CD8-positive, alpha-beta T cell (primary cell): ENCODE measurements at regions of chr7 and their contacts with region 1.

Region 1: DNA sequence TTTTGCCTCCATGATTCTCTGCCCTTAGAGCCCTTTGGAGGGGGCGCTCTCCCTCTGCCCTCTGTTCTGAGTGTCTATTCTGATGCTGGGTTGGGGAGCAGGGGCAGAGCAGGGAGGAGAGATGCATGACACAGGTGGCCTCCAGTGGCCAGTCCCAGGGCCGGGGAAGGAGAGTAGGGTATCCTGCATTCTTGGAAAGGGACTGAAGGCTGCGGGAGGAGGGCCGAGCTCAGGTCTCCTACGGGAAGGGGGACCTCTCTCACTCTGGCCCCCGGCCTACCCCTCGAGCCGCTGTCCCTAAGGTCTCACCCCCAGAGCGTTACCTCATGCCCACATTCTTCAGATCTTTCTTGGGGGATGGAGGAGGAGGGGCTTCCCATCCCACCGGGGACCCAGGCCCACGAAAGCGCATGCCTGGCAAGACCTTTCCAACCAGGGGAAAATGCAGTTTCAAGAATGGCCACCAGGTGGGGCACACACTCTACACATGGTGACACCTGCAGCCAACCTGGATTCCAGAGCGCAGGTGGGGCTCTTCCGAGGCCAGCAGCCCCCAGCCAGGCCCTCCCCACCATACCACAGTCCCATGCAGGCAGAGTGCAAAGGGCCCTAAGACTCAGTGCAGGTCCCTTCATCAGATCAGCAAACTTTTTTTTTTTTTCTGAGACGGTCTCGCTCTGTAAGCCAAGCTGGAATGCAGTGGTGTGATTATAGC is 86.4 kb downstream of the MYL10 start:
- DNase-seq: peak; percentile 50 to 84 (median 72)
- ATAC-seq: peak; percentile 65
- H3K4me3 ChIP-seq: no peak overlapping the region
- H3K4me3 Mint-ChIP-seq: no peak overlapping the region
- H3K27ac ChIP-seq: no peak overlapping the region
- H3K27ac Mint-ChIP-seq: no peak overlapping the region
- H3K4me1 ChIP-seq: no peaks in the 10 kb centered on the region
- H3K4me1 Mint-ChIP-seq: peaks cover 6% of the 10 kb centered on the region
- H3K27me3 ChIP-seq: no peaks in the 10 kb centered on the region
- H3K27me3 Mint-ChIP-seq: no peaks in the 10 kb centered on the region
- CTCF ChIP-seq: peak; percentile 86

Region 2: GRCh38 chr7:101363734-101364374 is 178.8 kb before region 1 on chr7:
- CTCF ChIA-PET with region 1: no interaction called
- POLR2A ChIA-PET with region 1: no interaction called
- intact Hi-C with region 1: loop called (anchors 1 to 2 kb)
- DNase-seq: peak; percentile 46 to 85 (median 66)
- ATAC-seq: peak; percentile 92
- H3K4me3 ChIP-seq: peak overlapping the region; percentile 37 to 58
- H3K4me3 Mint-ChIP-seq: peak overlapping the region; percentile 61
- H3K27ac ChIP-seq: no peak overlapping the region
- H3K27ac Mint-ChIP-seq: no peak overlapping the region
- H3K4me1 ChIP-seq: peaks cover 3% of the 10 kb centered on the region
- H3K4me1 Mint-ChIP-seq: peaks cover 3% of the 10 kb centered on the region
- H3K27me3 ChIP-seq: peaks cover 6 to 9% of the 10 kb centered on the region in 2 experiments
- H3K27me3 Mint-ChIP-seq: peaks cover 15% of the 10 kb centered on the region
- CTCF ChIP-seq: peak; percentile 89

Region 3: DNA sequence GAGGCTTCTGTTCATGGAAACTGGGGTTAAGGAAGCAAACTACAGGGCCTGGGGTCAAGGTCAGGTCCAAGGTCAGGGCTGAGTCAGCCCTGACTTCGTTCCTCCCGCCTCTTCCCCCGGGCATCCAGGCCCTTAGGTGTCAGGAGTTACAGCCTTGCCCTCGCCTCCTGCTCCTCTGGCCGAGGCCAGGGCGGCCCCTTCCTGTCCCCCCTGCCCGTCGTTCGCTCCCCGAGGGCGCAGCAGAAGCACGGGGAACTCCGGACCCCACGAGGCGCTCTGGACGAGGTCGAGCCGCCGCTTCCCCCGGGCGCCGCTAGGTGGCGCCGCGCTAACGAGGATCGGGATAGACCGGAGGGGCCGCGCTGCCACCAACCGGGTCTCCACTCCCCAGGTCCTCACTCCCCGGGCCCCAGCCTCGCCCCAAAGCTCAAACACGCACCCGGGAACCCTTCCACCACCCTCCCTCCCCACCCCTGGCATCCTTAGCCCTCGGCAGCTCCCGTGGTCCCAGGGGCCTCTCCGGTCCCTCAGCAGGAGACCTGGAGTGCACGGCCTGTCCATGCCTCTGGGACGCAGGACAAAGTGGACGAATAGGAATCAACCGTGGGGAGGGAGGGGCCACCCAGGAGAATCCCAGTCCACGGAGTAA is 145.6 kb after region 1 on chr7:
- CTCF ChIA-PET with region 1: interaction called, 3 read pairs
- POLR2A ChIA-PET with region 1: no interaction called
- intact Hi-C with region 1: loop called in 1 of 2 experiments (anchors 2 kb)
- DNase-seq: peak; percentile 61 to 92 (median 81)
- ATAC-seq: peak; percentile 86
- H3K4me3 ChIP-seq: no peak overlapping the region
- H3K4me3 Mint-ChIP-seq: no peak overlapping the region
- H3K27ac ChIP-seq: no peak overlapping the region
- H3K27ac Mint-ChIP-seq: no peak overlapping the region
- H3K4me1 ChIP-seq: no peaks in the 10 kb centered on the region
- H3K4me1 Mint-ChIP-seq: peaks cover 3% of the 10 kb centered on the region
- H3K27me3 ChIP-seq: no peaks in the 10 kb centered on the region
- H3K27me3 Mint-ChIP-seq: peaks cover 2% of the 10 kb centered on the region
- CTCF ChIP-seq: peak; percentile 93

Region 4: GRCh38 chr7:101708223-101708622 is 165.5 kb after region 1 on chr7:
- CTCF ChIA-PET with region 1: no interaction called
- POLR2A ChIA-PET with region 1: no interaction called
- intact Hi-C with region 1: no loop called
- DNase-seq: no peak
- ATAC-seq: no peak
- H3K4me3 ChIP-seq: no peak overlapping the region
- H3K4me3 Mint-ChIP-seq: no peak overlapping the region
- H3K27ac ChIP-seq: no peak overlapping the region
- H3K27ac Mint-ChIP-seq: no peak overlapping the region
- H3K4me1 ChIP-seq: no peaks in the 10 kb centered on the region
- H3K4me1 Mint-ChIP-seq: no peaks in the 10 kb centered on the region
- H3K27me3 ChIP-seq: no peaks in the 10 kb centered on the region
- H3K27me3 Mint-ChIP-seq: no peaks in the 10 kb centered on the region
- CTCF ChIP-seq: no peak

Region 5: DNA sequence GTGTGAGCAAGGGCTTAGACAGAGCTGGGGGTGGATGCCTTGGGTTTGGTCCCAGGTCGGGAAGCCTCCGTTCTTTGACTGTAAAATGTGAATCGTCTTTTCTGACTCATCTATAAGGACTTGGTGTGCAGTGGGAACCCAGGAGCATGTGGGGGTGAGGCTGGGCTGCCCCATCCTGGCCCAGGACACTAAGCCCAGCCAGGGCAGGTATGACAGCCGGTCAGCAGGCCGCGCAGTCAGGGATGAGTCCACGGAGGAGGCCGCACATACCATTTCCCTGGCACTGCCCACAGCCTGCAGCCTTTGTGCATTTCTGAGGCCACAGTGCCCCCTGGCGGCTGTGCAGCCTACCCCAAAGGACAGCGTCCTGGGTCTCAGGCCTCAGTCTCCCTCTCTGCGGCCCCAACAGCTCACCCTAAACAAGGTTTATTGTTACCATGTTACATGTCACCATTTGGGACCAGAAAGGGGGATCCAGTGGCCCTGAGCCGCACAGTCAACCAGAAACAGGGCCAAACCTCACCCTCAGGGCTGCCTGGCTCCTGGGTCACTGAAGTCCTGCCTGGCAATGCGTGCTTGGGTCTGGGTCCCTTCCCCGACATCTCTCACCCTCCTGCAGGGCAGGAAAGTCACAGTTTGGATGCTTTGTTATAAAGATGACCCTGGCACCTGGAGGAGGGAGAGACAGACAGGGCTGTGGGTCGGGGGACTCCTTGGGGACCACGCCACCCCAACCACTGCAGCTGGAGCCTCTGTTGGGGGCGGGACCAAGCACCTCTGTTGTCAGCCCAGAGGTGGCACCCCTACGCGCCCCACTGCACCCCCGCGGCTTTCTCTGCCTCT is 729.6 kb after region 1 on chr7:
- CTCF ChIA-PET with region 1: interaction called, 87 read pairs
- POLR2A ChIA-PET with region 1: no interaction called
- intact Hi-C with region 1: loop called in 1 of 2 experiments (anchors 1 kb)
- DNase-seq: peak; percentile 51 to 87 (median 76)
- ATAC-seq: peak; percentile 77
- H3K4me3 ChIP-seq: no peak overlapping the region
- H3K4me3 Mint-ChIP-seq: no peak overlapping the region
- H3K27ac ChIP-seq: no peak overlapping the region
- H3K27ac Mint-ChIP-seq: no peak overlapping the region
- H3K4me1 ChIP-seq: peaks cover 2% of the 10 kb centered on the region
- H3K4me1 Mint-ChIP-seq: peaks cover 2% of the 10 kb centered on the region
- H3K27me3 ChIP-seq: no peaks in the 10 kb centered on the region
- H3K27me3 Mint-ChIP-seq: no peaks in the 10 kb centered on the region
- CTCF ChIP-seq: peak; percentile 83

Region 6: DNA sequence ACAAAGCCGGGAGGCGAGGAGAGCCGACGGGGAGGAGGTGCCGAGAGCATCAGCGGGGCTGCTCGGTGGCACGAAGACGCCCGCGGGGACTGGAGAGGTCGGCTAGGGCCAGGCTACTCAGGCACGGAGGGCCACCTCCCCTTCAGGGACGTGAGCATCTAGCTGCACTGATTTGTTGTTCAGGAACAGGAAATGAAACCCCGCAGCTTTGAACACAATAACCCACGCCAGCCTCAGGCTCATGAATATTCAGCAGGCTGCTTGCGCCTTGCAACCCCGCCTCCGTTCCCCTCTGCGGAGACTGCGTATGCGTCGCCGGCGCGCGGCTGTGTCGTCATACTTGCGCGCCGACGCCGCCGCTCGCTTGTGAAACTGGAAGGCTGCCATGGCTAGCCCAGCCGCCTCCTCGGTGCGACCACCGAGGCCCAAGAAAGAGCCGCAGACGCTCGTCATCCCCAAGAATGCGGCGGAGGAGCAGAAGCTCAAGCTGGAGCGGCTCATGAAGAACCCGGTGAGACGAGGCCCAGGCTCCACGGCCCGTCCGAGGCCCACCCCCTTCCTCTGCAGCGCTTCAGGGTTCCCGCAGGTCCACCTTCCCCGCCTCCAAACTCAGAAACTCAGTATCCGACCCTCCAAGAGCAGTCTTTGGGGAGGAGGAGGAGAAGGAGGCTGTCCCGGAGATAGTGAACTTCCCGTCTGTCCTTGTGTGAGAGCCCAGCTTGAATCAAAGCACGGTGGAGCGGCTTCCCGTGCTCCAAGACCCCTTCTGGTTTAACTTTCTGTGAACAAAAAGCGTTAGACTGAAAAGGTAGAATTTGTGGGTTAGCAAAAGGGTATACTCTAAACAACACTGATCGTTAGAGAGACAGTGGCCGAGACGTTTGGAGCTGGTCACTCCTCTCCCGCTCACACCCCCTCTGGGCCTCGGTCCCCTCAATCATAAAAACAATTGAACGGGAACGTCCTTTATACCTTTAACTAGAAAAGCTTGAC is 853.6 kb after region 1 on chr7 and contains the start of gene PRKRIP1:
- CTCF ChIA-PET with region 1: interaction called, 3 read pairs
- POLR2A ChIA-PET with region 1: no interaction called
- intact Hi-C with region 1: loop called (anchors 2 to 10 kb)
- DNase-seq: peak; percentile 68 to 97 (median 84)
- ATAC-seq: peak; percentile 96
- H3K4me3 ChIP-seq: peak within 1 kb of the TSS; percentile 84 to 92
- H3K4me3 Mint-ChIP-seq: peak within 1 kb of the TSS; percentile 96
- H3K27ac ChIP-seq: peak within 1 kb of the TSS; percentile 82 to 84
- H3K27ac Mint-ChIP-seq: peak within 1 kb of the TSS; percentile 97
- H3K4me1 ChIP-seq: peaks cover 13% of the 10 kb centered on the region
- H3K4me1 Mint-ChIP-seq: peaks cover 26% of the 10 kb centered on the region
- H3K27me3 ChIP-seq: no peaks in the 10 kb centered on the region
- H3K27me3 Mint-ChIP-seq: no peaks in the 10 kb centered on the region
- CTCF ChIP-seq: no peak
- total RNA-seq, gene PRKRIP1: 51.1 to 57.2 TPM